GM12878 (cell line): ENCODE measurements at regions of chr16 and their contacts with region 1.

Region 1: GRCh38 chr16:31073968-31074813 is at the starts of genes ZNF646 and ZNF668:
- DNase-seq: peak; percentile 96
- ATAC-seq: peak; percentile 84
- H3K4me3 ChIP-seq: peak within 1 kb of the TSS; percentile 86
- H3K27ac ChIP-seq: peak within 1 kb of the TSS; percentile 89
- H3K4me1 ChIP-seq: peaks cover 3% of the 10 kb centered on the region; the same call in 1 of the 2 replicates
- H3K27me3 ChIP-seq: no peaks in the 10 kb centered on the region
- CTCF ChIP-seq: no peak
- EP300 ChIP-seq: no peak
- POLR2A ChIP-seq: peak; percentile 87
- RAD21 ChIP-seq: no peak
- polyA plus RNA-seq, gene ZNF646: 0.10 to 0.26 TPM
- polyA plus RNA-seq, gene ZNF668: 0.05 TPM in 1 of 2 experiments, not detected in the other

Region 2: DNA sequence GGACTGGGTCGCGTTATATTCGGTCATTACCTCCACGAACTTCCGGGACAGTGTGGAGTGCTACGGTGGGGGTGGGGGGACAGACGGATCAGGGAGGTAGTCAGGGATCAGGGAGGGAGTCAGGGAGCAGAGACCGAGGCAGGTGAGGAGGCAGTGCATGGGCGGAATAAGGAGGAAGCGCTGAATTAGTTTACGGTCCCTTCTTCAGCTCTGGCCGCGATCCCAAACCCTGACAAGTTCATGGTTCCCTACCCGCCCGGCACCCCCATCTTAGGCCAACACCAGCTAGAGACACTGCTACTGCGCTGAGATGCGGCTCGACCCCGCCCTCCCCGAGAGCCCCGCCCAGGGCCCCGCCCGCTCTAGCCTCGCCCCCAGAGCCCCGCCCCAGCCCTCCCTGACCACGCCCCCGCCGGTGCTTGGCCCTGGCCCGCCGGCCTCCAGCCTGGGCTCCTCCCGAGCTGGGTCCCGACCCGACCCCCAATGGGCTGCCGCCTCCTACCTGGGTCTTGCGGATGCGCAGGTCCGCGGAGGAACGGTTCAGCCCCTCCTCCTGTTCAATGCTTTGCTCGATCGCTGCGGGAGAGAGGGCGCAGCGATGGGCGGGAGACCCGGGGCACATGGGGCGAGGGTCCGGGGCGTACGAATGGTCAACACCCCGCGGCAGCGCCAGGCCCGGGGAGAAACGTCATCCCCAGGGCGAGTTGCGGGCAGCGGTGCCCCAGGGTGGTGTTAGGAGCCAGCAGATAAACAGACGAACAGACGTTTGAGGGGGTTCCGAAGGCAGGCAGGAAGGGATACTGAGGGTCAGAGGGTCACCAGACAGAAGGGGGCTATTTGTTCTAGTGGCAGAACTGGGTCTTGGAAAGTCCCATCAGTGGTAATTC is 76.9 kb before region 1 on chr16:
- CTCF ChIA-PET with region 1: no interaction called
- POLR2A ChIA-PET with region 1: interaction called, 21 read pairs
- RAD21 ChIA-PET with region 1: interaction called, 11 read pairs
- SMC1A ChIA-PET with region 1: interaction called, 3 read pairs
- in situ Hi-C with region 1: no loop called
- intact Hi-C with region 1: loop called (anchors 10 kb)
- DNase-seq: peak; percentile 51
- ATAC-seq: peak; percentile 90
- H3K4me3 ChIP-seq: peak overlapping the region; percentile 97
- H3K27ac ChIP-seq: peak overlapping the region; percentile 82
- H3K4me1 ChIP-seq: peaks cover 17% of the 10 kb centered on the region
- H3K27me3 ChIP-seq: no peaks in the 10 kb centered on the region; a peak in 1 of 4 replicates
- CTCF ChIP-seq: no peak
- EP300 ChIP-seq: no peak
- POLR2A ChIP-seq: peak; percentile 85
- RAD21 ChIP-seq: no peak

Region 3: GRCh38 chr16:31022544-31023251 is 51.5 kb before region 1 on chr16:
- CTCF ChIA-PET with region 1: no interaction called
- POLR2A ChIA-PET with region 1: no interaction called
- RAD21 ChIA-PET with region 1: no interaction called
- SMC1A ChIA-PET with region 1: no interaction called
- in situ Hi-C with region 1: no loop called
- intact Hi-C with region 1: no loop called
- DNase-seq: no peak
- ATAC-seq: no peak
- H3K4me3 ChIP-seq: no peak overlapping the region
- H3K27ac ChIP-seq: no peak overlapping the region
- H3K4me1 ChIP-seq: no peaks in the 10 kb centered on the region
- H3K27me3 ChIP-seq: no peaks in the 10 kb centered on the region
- CTCF ChIP-seq: no peak
- EP300 ChIP-seq: no peak
- POLR2A ChIP-seq: no peak
- RAD21 ChIP-seq: no peak

Region 4: DNA sequence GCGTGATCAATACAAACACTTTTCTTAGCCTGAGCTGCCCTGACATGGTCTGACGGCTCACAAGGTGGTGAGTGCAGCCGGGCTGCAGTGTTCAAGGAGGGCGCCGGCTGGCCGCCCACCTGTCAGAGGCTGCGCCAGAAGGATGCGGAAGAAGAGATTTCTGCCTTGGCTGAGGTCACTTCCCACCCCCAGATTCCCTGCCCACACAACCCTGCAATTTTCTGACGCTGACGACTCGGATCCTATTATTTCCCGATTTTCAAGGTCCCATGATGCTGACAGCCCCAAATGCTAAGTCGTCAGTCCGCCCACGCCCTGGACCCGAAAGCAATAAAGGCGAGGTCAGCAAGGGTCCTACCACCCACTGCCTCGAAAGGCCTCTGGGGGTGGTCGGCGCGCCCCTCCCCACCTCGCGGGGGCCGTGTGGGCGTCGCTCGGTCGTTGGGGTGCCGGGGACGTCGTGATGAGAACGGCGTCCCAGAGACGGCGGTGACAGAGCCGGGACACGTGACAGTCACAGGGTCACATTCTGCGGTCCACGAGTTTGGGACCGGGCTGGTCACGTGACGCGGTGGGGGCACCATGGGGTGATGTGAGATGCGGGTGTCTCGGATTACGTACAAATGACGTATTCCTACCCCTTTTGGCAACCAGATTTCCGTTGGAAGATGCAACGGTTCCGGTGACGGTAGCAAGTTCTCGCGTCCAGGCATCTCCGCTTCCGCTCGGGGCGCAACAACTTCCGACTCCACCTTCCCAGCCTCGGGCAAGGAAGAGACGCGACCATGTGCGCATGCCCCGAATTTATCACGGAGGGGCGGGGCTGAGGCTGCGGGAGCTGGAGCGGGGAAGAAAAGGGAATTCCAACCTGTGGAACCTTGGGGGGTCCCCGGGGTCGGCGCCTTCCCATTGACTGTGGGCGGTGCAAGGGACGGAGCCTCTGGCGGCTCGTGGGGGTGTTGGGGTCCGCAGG is 41.2 kb before region 1 on chr16 and contains the start of gene STX4:
- CTCF ChIA-PET with region 1: interaction called, 3 read pairs
- POLR2A ChIA-PET with region 1: interaction called, 9 read pairs
- RAD21 ChIA-PET with region 1: interaction called, 12 read pairs
- SMC1A ChIA-PET with region 1: no interaction called
- in situ Hi-C with region 1: no loop called
- intact Hi-C with region 1: loop called (anchors 1 kb)
- DNase-seq: peak; percentile 97
- ATAC-seq: peak; percentile 87
- H3K4me3 ChIP-seq: peak within 1 kb of the TSS; percentile 86
- H3K27ac ChIP-seq: peak within 1 kb of the TSS; percentile 73
- H3K4me1 ChIP-seq: no peaks in the 10 kb centered on the region; the same call in 1 of the 2 replicates
- H3K27me3 ChIP-seq: no peaks in the 10 kb centered on the region
- CTCF ChIP-seq: no peak
- EP300 ChIP-seq: peak; percentile 56 to 79
- POLR2A ChIP-seq: peak; percentile 79
- RAD21 ChIP-seq: no peak
- polyA plus RNA-seq, gene STX4: 3.3 to 8.5 TPM

Region 5: DNA sequence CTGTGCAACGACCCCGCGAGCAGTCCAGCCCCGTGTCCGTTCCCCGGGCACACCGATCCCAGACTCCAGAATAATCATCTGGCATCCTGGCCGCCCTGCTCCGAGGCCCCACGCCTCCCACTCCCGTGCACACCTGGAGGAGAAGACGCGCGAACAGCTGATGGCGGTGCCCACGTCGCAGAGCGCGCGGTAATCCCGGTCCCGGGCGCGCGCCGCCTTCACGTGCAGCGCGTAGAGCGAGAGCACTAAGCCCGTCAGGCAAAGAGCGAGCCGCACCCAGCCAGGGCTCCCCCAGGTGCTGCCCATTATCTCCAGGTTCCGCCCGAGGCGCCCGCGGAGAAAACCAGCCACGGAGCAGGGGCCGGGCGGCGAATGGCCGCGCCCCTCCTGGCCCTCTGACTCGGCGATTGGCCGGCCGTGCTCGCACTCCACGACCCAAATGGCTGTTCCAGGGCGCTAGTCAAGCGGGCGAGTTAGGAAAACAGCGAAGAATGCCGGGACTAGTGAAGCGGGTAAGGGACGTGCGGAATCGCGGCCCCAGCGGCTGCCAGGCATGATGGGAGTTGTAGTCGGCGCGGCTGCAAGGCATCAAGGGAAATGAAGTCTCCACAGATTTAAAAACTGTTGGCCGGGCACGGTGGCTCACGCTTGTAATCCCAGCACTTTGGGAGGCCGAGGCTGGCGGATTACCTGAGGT is 20.4 kb after region 1 on chr16 and contains the start of gene VKORC1:
- CTCF ChIA-PET with region 1: interaction called, 7 read pairs
- POLR2A ChIA-PET with region 1: interaction called, 14 read pairs
- RAD21 ChIA-PET with region 1: interaction called, 8 read pairs
- SMC1A ChIA-PET with region 1: interaction called, 10 read pairs
- in situ Hi-C with region 1: no loop called
- intact Hi-C with region 1: loop called (anchors 1 kb)
- DNase-seq: peak; percentile 87
- ATAC-seq: peak; percentile 89
- H3K4me3 ChIP-seq: peak within 1 kb of the TSS; percentile 99
- H3K27ac ChIP-seq: peak within 1 kb of the TSS; percentile 81
- H3K4me1 ChIP-seq: peaks cover 8% of the 10 kb centered on the region
- H3K27me3 ChIP-seq: no peaks in the 10 kb centered on the region
- CTCF ChIP-seq: no peak
- EP300 ChIP-seq: no peak
- POLR2A ChIP-seq: peak; percentile 79
- RAD21 ChIP-seq: no peak
- polyA plus RNA-seq, gene VKORC1: 19.8 to 39.0 TPM

Region 6: GRCh38 chr16:31117391-31118197 is 43.4 kb after region 1 on chr16 and contains the start of gene KAT8:
- CTCF ChIA-PET with region 1: interaction called, 3 read pairs
- POLR2A ChIA-PET with region 1: interaction called, 11 read pairs
- RAD21 ChIA-PET with region 1: interaction called, 10 read pairs
- SMC1A ChIA-PET with region 1: interaction called, 5 read pairs
- in situ Hi-C with region 1: no loop called
- intact Hi-C with region 1: no loop called
- DNase-seq: peak; percentile 72
- ATAC-seq: peak; percentile 96
- H3K4me3 ChIP-seq: peak within 1 kb of the TSS; percentile 84
- H3K27ac ChIP-seq: peak within 1 kb of the TSS; percentile 73
- H3K4me1 ChIP-seq: peaks cover 8% of the 10 kb centered on the region
- H3K27me3 ChIP-seq: no peaks in the 10 kb centered on the region
- CTCF ChIP-seq: no peak
- EP300 ChIP-seq: no peak
- POLR2A ChIP-seq: peak; percentile 96
- RAD21 ChIP-seq: no peak
- polyA plus RNA-seq, gene KAT8: 5.5 to 11.2 TPM